PC-3 (cell line): ENCODE measurements at regions of chr1 and their contacts with region 1.

Region 1: GRCh38 chr1:101520302-101520701 is 283.5 kb downstream of the S1PR1 start:
- DNase-seq: peak; percentile 67
- ATAC-seq: peak; percentile 79
- H3K4me3 ChIP-seq: no peak overlapping the region
- H3K27ac ChIP-seq: no peak overlapping the region
- H3K4me1 ChIP-seq: no peaks in the 10 kb centered on the region
- H3K27me3 ChIP-seq: peaks cover 31% of the 10 kb centered on the region; the same call in 1 of the 2 replicates
- CTCF ChIP-seq: peak; percentile 90

Region 2: GRCh38 chr1:101506541-101507164 is 13.6 kb before region 1 on chr1:
- CTCF ChIA-PET with region 1: no interaction called
- POLR2A ChIA-PET with region 1: no interaction called
- intact Hi-C with region 1: no loop called
- DNase-seq: peak; percentile 68
- ATAC-seq: peak; percentile 45; the same call in 1 of the 2 replicates
- H3K4me3 ChIP-seq: no peak overlapping the region
- H3K27ac ChIP-seq: no peak overlapping the region
- H3K4me1 ChIP-seq: no peaks in the 10 kb centered on the region
- H3K27me3 ChIP-seq: peaks cover 13% of the 10 kb centered on the region; the same call in 1 of the 2 replicates
- CTCF ChIP-seq: peak; percentile 84

Region 3: DNA sequence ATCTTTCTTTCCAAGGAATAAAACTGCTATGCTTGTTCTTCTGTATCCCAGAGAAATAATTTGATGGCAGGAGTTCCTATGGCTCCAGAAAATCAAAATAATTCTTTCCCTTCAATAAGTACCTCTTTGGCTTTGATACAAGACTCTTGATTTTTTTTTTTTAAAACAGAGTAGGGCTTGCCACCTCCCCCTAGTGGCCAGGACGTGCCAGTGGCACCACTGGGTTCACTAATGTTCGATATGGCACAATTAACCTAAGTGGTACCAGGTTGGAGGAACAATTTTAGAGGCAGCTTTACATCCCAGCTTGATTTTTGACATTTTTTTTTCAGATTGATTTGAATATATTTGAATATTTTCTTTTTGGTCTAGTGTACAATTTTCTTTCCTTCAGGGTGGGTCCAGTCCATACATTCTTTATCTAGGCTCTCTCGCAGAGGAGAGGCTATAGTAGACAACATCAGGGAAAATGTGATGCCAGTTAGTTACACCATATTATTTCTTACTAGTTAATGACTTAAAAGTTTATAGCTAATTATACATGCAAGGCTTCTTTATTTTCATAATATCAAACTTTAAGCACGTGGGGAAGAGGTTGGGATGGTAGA is 47.4 kb after region 1 on chr1:
- CTCF ChIA-PET with region 1: interaction called, 3 read pairs
- POLR2A ChIA-PET with region 1: no interaction called
- intact Hi-C with region 1: loop called (anchors 5 kb)
- DNase-seq: peak; percentile 51
- ATAC-seq: peak; percentile 68
- H3K4me3 ChIP-seq: no peak overlapping the region
- H3K27ac ChIP-seq: no peak overlapping the region
- H3K4me1 ChIP-seq: no peaks in the 10 kb centered on the region
- H3K27me3 ChIP-seq: peaks cover 28% of the 10 kb centered on the region
- CTCF ChIP-seq: peak; percentile 93

Region 4: DNA sequence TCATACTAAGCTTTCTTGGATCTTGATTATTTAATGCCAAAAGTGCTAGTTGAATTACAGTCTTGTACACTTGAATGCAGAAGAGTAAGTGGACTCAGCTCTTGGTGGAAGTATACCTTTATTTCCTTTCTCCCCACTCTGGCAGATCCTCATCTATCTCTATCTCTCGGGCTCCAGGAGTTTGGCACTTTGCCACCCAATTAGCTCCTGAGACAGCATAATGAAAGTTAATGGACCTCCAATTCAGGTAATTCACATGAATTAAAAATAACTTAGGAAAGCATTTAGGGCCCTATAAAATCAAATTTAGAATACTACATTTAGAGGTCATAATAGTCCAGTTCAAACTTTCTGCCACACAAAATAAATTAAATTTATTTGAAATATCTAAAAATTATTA is 409.0 kb after region 1 on chr1:
- CTCF ChIA-PET with region 1: no interaction called
- POLR2A ChIA-PET with region 1: no interaction called
- intact Hi-C with region 1: no loop called
- DNase-seq: no peak
- ATAC-seq: no peak
- H3K4me3 ChIP-seq: no peak overlapping the region
- H3K27ac ChIP-seq: no peak overlapping the region
- H3K4me1 ChIP-seq: no peaks in the 10 kb centered on the region
- H3K27me3 ChIP-seq: no peaks in the 10 kb centered on the region
- CTCF ChIP-seq: no peak

Region 5: GRCh38 chr1:101971304-101971703 is 451.0 kb after region 1 on chr1:
- CTCF ChIA-PET with region 1: no interaction called
- POLR2A ChIA-PET with region 1: no interaction called
- intact Hi-C with region 1: loop called (anchors 5 kb)
- DNase-seq: peak; percentile 29
- ATAC-seq: no peak
- H3K4me3 ChIP-seq: no peak overlapping the region
- H3K27ac ChIP-seq: no peak overlapping the region
- H3K4me1 ChIP-seq: no peaks in the 10 kb centered on the region
- H3K27me3 ChIP-seq: peaks cover 39% of the 10 kb centered on the region
- CTCF ChIP-seq: peak; percentile 56